Natural killer cell (primary cell): ENCODE measurements at regions of chr4 and their contacts with region 1.

Region 1: GRCh38 chr4:155667568-155668511 is 1.2 kb downstream of the GUCY1A1 start:
- DNase-seq: peak; percentile 3 to 49
- ATAC-seq: peak; percentile 54 to 70 (median 70)
- H3K4me3 ChIP-seq: peak overlapping the region; percentile 61
- H3K4me3 Mint-ChIP-seq: peak overlapping the region; percentile 92
- H3K27ac ChIP-seq: peak overlapping the region; percentile 76
- H3K27ac Mint-ChIP-seq: peak overlapping the region; percentile 48 to 97
- H3K4me1 ChIP-seq: peaks cover 7% of the 10 kb centered on the region
- H3K4me1 Mint-ChIP-seq: peaks cover 19 to 27% of the 10 kb centered on the region in 2 donors
- H3K27me3 ChIP-seq: peaks cover 3% of the 10 kb centered on the region
- H3K27me3 Mint-ChIP-seq: peaks cover 13 to 20% of the 10 kb centered on the region in 2 donors
- CTCF ChIP-seq: no peak

Region 2: DNA sequence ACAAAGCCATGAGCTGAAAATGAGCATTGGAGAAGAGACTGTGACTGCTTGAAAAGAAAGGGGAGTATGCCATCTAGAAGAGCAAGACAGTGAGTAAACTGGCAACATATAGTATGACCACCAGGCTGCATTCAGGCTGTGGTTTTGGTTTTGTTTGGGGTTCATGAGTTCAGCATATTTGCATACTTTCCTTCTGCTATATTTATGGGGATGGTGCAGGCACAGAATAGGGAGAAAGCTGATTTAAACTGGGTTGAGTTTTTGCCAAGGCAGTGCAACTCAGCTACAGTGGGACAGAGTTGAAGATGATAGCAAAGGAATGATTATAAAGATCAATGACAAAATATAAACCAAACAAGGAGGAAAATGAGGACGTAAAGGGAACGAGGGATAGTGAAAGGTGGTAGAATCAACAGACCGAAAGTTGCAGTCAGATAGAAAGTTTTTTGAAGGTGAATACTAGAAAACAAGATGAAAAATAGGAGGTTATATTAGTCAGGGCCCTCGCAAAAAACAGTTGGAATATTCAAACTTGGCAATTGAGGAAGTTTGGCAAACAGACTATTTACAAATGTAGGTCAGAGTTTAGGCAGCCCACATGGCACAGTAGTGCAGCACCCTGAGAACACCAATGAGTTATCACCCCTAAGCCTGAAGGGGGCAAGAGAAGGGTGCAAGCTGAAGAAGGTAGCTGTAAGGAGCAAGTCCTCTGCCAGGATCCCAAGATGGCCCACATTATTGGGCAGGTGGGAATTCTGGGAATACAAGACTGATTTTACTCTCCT is 176.3 kb before region 1 on chr4:
- intact Hi-C with region 1: no loop called
- DNase-seq: no peak
- ATAC-seq: no peak
- H3K4me3 ChIP-seq: no peak overlapping the region
- H3K4me3 Mint-ChIP-seq: no peak overlapping the region
- H3K27ac ChIP-seq: no peak overlapping the region
- H3K27ac Mint-ChIP-seq: no peak overlapping the region
- H3K4me1 ChIP-seq: no peaks in the 10 kb centered on the region
- H3K4me1 Mint-ChIP-seq: no peaks in the 10 kb centered on the region
- H3K27me3 ChIP-seq: no peaks in the 10 kb centered on the region
- H3K27me3 Mint-ChIP-seq: peaks cover 0 to 7% of the 10 kb centered on the region in 2 donors
- CTCF ChIP-seq: no peak

Region 3: DNA sequence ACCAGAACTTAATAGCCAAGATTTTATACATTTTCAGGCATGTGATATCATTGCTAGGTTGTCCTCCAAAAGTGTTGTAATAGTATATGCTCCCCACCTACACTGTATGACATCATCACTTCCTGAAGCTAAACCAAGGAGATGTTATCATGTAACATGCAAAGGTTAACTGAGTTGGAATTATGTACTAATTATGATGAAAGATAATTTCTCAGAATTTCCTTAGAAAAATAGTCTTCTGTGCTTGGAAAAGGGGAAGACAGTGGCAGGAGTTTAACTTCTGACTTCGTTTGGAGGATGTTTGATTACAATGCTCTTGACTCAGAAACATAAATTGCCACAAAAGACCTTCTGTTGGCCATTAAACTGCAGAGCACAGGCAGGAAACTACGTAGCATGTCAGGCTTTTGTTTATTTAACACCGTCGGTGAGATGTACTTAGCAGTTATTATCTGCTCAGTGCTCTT is 84.8 kb before region 1 on chr4:
- intact Hi-C with region 1: loop called (anchors 2 kb)
- DNase-seq: peak in 1 of 2 donors; percentile 31
- ATAC-seq: peak; percentile 78 to 93 (median 92)
- H3K4me3 ChIP-seq: no peak overlapping the region
- H3K4me3 Mint-ChIP-seq: peak overlapping the region; percentile 14
- H3K27ac ChIP-seq: peak overlapping the region; percentile 7
- H3K27ac Mint-ChIP-seq: peak overlapping the region; percentile 81 to 84
- H3K4me1 ChIP-seq: no peaks in the 10 kb centered on the region
- H3K4me1 Mint-ChIP-seq: peaks cover 11 to 12% of the 10 kb centered on the region in 2 donors
- H3K27me3 ChIP-seq: no peaks in the 10 kb centered on the region
- H3K27me3 Mint-ChIP-seq: no peaks in the 10 kb centered on the region
- CTCF ChIP-seq: no peak

Region 4: GRCh38 chr4:155758481-155759404 is 90.9 kb after region 1 on chr4 and contains the start of gene GUCY1B1:
- intact Hi-C with region 1: loop called (anchors 2 kb)
- DNase-seq: peak; percentile 77 to 91
- ATAC-seq: peak; percentile 96 to 98 (median 96)
- H3K4me3 ChIP-seq: peak within 1 kb of the TSS; percentile 62
- H3K4me3 Mint-ChIP-seq: peak within 1 kb of the TSS; percentile 79
- H3K27ac ChIP-seq: peak within 1 kb of the TSS; percentile 44
- H3K27ac Mint-ChIP-seq: peak within 1 kb of the TSS; percentile 84 to 87
- H3K4me1 ChIP-seq: peaks cover 9% of the 10 kb centered on the region
- H3K4me1 Mint-ChIP-seq: peaks cover 11% of the 10 kb centered on the region in 2 donors
- H3K27me3 ChIP-seq: no peaks in the 10 kb centered on the region
- H3K27me3 Mint-ChIP-seq: no peaks in the 10 kb centered on the region
- CTCF ChIP-seq: peak; percentile 28
- total RNA-seq, gene GUCY1B1: 2.1 to 4.0 (median 2.8) TPM

Region 5: GRCh38 chr4:155777971-155778735 is 110.3 kb after region 1 on chr4:
- intact Hi-C with region 1: no loop called
- DNase-seq: no peak
- ATAC-seq: no peak
- H3K4me3 ChIP-seq: no peak overlapping the region
- H3K4me3 Mint-ChIP-seq: no peak overlapping the region
- H3K27ac ChIP-seq: no peak overlapping the region
- H3K27ac Mint-ChIP-seq: no peak overlapping the region
- H3K4me1 ChIP-seq: no peaks in the 10 kb centered on the region
- H3K4me1 Mint-ChIP-seq: no peaks in the 10 kb centered on the region
- H3K27me3 ChIP-seq: no peaks in the 10 kb centered on the region
- H3K27me3 Mint-ChIP-seq: no peaks in the 10 kb centered on the region
- CTCF ChIP-seq: no peak